WTC11 (cell line): ENCODE measurements at regions of chr2 and their contacts with region 1.

Region 1: DNA sequence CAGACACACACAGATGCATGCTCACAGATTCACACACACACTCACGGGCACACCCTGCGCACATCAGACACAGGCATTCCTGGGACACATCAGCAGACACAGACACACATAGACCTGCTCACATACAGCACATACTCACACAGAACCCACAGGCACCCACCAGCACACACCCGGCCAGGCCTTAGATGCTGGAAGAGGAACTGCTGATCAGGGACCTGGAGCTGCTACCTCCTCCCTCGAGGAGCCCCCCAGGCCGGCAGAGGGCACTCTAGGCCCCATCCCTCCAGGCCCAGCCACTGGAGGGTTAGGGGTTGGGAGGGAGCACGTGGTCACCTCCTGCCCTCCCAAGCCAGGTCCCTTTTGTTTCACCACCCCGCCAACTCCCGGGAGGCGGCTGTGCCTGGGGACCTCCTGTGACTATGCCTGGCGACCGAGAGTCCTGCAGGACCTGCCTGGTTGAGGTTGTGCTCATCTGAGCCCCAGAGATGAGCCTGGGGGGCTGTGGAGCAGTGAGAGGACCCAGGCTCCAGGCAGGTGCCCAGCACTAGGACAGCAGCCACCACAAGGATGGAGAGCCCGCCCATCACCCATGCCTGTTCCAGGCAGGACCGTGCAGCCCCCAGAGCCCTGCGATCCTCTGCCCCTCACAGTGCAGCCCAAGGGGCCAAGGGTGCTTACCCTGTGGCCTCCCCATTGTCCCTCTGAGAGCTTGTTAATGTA is 21.0 kb upstream of the PTMA start:
- DNase-seq: peak; percentile 92
- ATAC-seq: peak; percentile 87
- H3K4me3 Mint-ChIP-seq: peak overlapping the region; percentile 64
- H3K27ac Mint-ChIP-seq: peak overlapping the region; percentile 61
- H3K4me1 Mint-ChIP-seq: peaks cover 49% of the 10 kb centered on the region
- H3K27me3 Mint-ChIP-seq: no peaks in the 10 kb centered on the region
- CTCF ChIP-seq: peak; percentile 33

Region 2: GRCh38 chr2:231640641-231641135 is 46.6 kb before region 1 on chr2:
- CTCF ChIA-PET with region 1: no interaction called
- POLR2A ChIA-PET with region 1: no interaction called
- DNase-seq: no peak
- ATAC-seq: peak; percentile 19; the same call in 1 of the 2 replicates
- H3K4me3 Mint-ChIP-seq: no peak overlapping the region
- H3K27ac Mint-ChIP-seq: peak overlapping the region; percentile 11; the same call in 1 of the 2 replicates
- H3K4me1 Mint-ChIP-seq: peaks cover 15% of the 10 kb centered on the region
- H3K27me3 Mint-ChIP-seq: 0 out of 2 replicates have a peak, but pooled peaks cover 3% of the 10 kb centered on the region
- CTCF ChIP-seq: no peak

Region 3: DNA sequence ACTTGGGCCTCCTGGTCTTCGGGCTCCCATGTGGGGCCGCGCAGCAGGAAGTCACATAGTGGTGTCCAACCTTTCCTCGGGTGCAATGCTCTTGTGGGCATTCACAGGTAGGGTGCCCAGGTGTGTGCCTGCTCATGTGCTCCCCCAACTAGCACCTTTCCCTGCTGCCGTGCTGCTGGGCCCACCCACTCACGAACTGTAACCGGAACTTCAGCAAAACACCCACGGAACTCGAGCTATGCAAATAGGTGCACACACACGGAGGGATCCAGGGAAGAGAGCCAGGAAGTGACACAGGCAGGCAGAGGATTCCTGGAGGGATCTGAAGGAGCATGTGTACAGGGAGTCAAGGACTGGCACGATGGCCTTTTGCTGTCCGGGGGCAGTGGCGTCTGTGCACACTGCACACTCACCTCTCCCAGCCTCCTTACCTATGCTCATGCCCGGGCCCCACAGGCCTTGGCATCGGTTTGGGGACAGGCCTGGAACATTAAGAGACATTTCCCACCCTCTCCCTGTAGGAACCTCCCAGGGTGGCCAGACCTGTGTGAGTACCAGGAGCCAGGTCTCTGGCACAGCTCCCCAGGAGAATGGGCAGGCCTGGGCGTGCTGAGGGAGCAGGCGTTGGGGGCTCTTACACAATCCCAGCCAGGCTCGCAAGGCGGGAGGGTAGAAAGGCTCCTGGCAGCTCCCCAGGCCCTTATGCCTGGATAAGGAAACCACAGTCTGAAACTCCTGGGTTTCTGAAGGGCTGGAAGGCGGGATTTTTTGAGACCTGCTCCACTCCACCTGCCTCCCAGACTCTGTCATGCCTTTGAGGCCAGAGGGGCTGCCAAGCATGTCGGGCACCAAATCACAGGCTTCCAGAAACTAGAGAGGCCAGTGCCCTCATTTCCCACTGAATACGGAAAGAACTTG is 14.4 kb after region 1 on chr2:
- CTCF ChIA-PET with region 1: interaction called, 49 read pairs
- POLR2A ChIA-PET with region 1: interaction called, 18 read pairs
- DNase-seq: no peak
- ATAC-seq: no peak
- H3K4me3 Mint-ChIP-seq: no peak overlapping the region
- H3K27ac Mint-ChIP-seq: peak overlapping the region; percentile 55; the same call in 1 of the 2 replicates
- H3K4me1 Mint-ChIP-seq: peaks cover 13% of the 10 kb centered on the region
- H3K27me3 Mint-ChIP-seq: peaks cover 3% of the 10 kb centered on the region; the same call in 1 of the 2 replicates
- CTCF ChIP-seq: no peak